OCI-LY7 (cell line): ENCODE measurements at regions of chr14 and their contacts with region 1.

Region 1: GRCh38 chr14:59150990-59151389 is 37.5 kb upstream of the DAAM1 start:
- DNase-seq: peak; percentile 82
- H3K4me3 ChIP-seq: peak overlapping the region; percentile 8
- H3K27ac ChIP-seq: peak overlapping the region; percentile 66
- H3K4me1 ChIP-seq: peaks cover 62% of the 10 kb centered on the region
- CTCF ChIP-seq: no peak

Region 2: DNA sequence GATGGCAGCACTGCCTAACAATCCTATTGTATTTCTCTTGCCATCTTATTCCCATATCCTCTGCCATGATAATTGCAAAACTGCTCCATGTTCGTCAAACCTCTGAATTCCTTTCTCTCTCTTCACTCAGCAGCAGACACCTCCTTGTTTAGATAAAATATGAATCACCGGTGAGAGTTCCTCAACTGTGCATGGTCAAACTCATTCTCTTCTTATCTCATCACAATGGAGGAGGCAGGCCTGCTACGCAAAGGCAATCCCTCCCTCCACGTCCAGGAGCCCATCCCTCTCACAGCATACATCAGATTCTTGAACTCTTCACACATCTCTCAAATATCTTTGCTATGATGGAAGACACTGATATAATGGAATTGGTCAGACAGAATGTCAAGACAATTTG is 52.6 kb before region 1 on chr14:
- CTCF ChIA-PET with region 1: no interaction called
- POLR2A ChIA-PET with region 1: no interaction called
- intact Hi-C with region 1: no loop called
- DNase-seq: no peak
- H3K4me3 ChIP-seq: no peak overlapping the region
- H3K27ac ChIP-seq: no peak overlapping the region
- H3K4me1 ChIP-seq: no peaks in the 10 kb centered on the region
- CTCF ChIP-seq: no peak

Region 3: DNA sequence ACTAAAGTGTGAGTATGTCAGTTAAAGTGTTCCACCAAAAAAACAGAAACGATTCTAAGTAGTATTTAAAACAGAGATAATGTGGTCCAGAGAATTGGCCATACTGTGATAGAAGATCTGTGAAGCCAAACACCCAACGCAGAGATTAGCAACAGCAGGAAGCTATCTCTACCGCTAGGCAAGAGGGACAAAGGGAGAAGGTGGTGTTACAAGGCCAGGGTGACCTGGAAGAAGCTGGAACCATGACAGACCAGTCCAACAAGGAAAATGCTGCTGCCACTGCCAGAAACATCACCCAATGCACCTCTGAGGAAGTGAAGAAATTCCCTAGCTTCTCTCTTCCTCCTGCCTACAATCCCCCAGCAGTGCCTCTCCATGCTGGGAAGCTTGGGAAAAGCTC is 34.0 kb after region 1 on chr14:
- CTCF ChIA-PET with region 1: no interaction called
- POLR2A ChIA-PET with region 1: interaction called, 14 read pairs
- intact Hi-C with region 1: loop called (anchors 1 kb)
- DNase-seq: no peak
- H3K4me3 ChIP-seq: no peak overlapping the region
- H3K27ac ChIP-seq: no peak overlapping the region
- H3K4me1 ChIP-seq: peaks cover 34% of the 10 kb centered on the region
- CTCF ChIP-seq: no peak

Region 4: GRCh38 chr14:59320763-59321640 is 170.0 kb after region 1 on chr14:
- CTCF ChIA-PET with region 1: no interaction called
- POLR2A ChIA-PET with region 1: no interaction called
- intact Hi-C with region 1: no loop called
- DNase-seq: no peak
- H3K4me3 ChIP-seq: no peak overlapping the region
- H3K27ac ChIP-seq: no peak overlapping the region
- H3K4me1 ChIP-seq: peaks cover 24% of the 10 kb centered on the region
- CTCF ChIP-seq: no peak